ENCODE measurements at regions of chr3 and their contacts with region 1.

Region 1: DNA sequence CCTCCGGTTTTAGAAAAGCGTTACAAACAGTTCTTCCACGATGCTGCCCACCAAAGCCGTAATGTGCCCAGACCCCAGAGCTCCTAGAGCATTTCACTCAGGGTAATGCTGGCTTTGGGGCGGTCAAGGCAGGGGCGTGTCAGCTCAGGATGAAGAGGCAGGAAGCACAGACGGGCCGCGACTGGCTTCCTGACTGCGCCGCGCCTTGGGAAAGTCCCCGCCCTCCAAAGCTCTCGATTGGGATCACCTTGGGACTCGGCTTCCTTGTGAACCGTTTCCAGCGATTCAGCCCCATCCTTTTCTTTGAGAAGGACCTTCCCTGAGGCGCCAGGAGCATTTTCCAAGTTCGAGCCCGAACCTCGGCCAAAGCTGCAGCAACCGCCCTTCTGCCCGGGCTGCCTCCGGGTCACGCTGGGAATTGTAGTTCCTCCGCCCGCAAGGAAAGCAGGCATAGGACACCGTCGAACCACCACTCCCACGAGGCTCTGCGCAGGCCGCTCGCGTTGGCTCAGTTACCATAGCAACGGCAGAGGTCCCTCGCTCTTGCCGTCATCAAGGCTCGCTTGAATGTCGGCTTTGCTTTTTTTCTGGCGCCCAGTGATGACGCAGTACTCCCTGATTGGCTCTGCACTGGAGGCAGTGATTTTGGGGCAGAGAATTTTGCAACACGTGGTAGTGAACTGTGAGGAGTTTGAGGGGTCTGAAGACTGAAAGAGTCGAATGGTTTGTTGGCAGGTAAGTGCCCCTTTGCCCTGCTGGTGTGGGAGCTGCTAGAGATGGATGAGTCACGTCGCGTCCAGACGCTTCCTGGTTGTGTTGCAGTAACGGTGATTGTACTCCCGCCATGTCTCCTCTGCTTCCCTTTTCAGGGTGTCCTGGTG is at the starts of genes CCDC191 and QTRT2:
- DNase-seq: peak; percentile 97 to 100
- ATAC-seq: peak; percentile 94 to 98 (median 96)
- H3K4me3 ChIP-seq: peak within 1 kb of the TSS; percentile 82
- H3K4me3 Mint-ChIP-seq: peak within 1 kb of the TSS; percentile 98
- H3K27ac ChIP-seq: peak within 1 kb of the TSS; percentile 69
- H3K27ac Mint-ChIP-seq: peak within 1 kb of the TSS; percentile 95 to 96
- H3K4me1 ChIP-seq: peaks cover 6% of the 10 kb centered on the region
- H3K4me1 Mint-ChIP-seq: peaks cover 38 to 47% of the 10 kb centered on the region in 2 donors
- H3K27me3 ChIP-seq: no peaks in the 10 kb centered on the region
- H3K27me3 Mint-ChIP-seq: no peaks in the 10 kb centered on the region
- CTCF ChIP-seq: no peak
- total RNA-seq, gene CCDC191: 5.5 to 6.4 (median 5.7) TPM
- total RNA-seq, gene QTRT2: 30.1 to 33.4 (median 30.5) TPM

Region 2: DNA sequence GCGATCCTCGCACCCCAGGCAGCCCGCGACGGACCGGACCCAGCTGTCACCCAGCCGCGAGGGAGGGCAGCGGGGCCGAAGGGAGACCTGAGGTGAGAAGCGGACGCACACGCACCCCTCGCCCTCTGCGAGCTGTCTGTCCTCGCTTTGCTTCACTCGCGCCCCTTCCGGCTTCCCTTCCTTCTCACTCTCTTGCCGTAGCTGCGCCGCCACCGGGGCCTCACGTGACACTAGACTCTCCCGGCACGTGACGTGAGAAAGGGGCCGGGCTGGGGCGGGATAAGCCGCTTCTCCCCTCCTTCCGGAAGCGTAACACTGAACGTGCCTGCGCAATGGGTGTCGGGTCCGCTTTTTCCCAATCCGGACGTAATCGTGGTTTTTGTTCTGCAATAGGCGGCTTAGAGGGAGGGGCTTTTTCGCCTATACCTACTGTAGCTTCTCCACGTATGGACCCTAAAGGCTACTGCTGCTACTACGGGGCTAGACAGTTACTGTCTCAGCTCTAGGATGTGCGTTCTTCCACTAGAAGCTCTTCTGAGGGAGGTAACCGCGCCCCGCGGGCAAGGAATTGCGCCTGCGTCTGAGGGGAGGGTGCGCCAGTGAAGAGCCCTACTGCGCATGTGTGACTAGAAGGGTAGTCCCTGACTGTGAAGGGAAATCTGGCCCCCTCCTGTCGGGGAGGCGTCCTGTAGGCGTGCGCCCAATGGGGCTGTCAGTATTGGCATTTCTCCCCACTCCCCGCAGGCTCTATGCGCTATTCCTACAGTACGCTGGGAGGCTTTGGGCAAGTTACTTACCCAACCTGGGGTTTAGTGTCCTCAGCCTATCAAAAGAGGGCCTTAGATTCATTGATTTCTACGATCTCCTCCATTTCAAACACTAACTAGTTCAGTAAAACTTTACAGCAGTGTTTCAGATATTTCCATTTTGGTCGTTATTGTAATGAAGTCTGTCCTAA is 1494.4 kb before region 1 on chr3 and contains the starts of genes ATG3 and SLC35A5:
- intact Hi-C with region 1: loop called (anchors 5 kb)
- DNase-seq: peak; percentile 98 to 99
- ATAC-seq: peak; percentile 80 to 94 (median 86)
- H3K4me3 ChIP-seq: peak within 1 kb of the TSS; percentile 92
- H3K4me3 Mint-ChIP-seq: peak within 1 kb of the TSS; percentile 95
- H3K27ac ChIP-seq: peak within 1 kb of the TSS; percentile 96
- H3K27ac Mint-ChIP-seq: peak within 1 kb of the TSS; percentile 96 to 97
- H3K4me1 ChIP-seq: peaks cover 15% of the 10 kb centered on the region
- H3K4me1 Mint-ChIP-seq: peaks cover 46 to 47% of the 10 kb centered on the region in 2 donors
- H3K27me3 ChIP-seq: no peaks in the 10 kb centered on the region
- H3K27me3 Mint-ChIP-seq: no peaks in the 10 kb centered on the region
- CTCF ChIP-seq: no peak
- total RNA-seq, gene ATG3: 49.4 to 53.6 (median 52.0) TPM
- total RNA-seq, gene SLC35A5: 10.5 to 17.4 (median 11.2) TPM

Region 3: DNA sequence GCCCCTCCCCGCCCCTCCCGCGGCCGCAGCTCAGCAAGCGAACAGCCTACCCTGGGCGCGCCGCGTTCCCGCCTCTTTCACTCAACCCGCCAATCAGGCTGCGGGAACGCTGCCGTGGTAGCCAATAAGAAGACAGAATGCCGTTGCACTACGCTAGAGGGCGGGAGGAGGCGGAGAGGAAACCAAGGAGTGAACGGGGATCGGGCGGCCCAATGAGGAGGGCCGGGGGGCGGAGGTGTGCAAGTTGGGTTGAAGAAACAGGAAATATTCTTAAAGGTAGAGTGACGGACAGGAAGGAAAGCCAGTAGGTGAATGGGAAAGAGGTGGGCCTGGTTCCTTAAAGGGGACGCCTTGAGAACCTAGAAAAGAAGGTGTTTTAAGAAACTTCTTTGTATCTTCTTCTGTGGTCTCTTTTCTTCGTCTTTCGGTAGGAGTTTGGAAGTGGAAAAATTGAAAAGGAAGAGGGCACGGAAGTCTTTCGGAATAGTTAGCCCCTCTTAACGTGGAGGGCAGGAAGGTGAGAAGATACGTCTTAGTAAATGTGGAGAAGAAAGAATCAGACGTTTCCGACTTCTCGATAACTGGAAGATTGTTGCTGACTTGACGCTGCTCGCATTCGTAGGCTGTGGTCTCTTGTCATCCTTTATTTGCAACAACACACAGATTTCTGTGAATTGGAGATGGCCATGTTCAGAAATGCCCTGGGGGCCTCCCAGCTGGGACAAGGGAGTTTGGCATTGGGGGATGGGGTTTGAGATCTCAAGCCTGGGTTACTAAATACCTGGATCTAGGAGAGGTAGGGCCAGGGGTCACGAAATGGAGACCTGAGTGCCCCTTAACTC is 359.5 kb before region 1 on chr3:
- intact Hi-C with region 1: loop called (anchors 2 kb)
- DNase-seq: peak; percentile 99
- ATAC-seq: peak; percentile 86 to 95 (median 87)
- H3K4me3 ChIP-seq: peak overlapping the region; percentile 83
- H3K4me3 Mint-ChIP-seq: no peak overlapping the region
- H3K27ac ChIP-seq: peak overlapping the region; percentile 90
- H3K27ac Mint-ChIP-seq: no peak overlapping the region
- H3K4me1 ChIP-seq: peaks cover 9% of the 10 kb centered on the region
- H3K4me1 Mint-ChIP-seq: peaks cover 20 to 21% of the 10 kb centered on the region in 2 donors
- H3K27me3 ChIP-seq: no peaks in the 10 kb centered on the region
- H3K27me3 Mint-ChIP-seq: no peaks in the 10 kb centered on the region
- CTCF ChIP-seq: no peak

Region 4: DNA sequence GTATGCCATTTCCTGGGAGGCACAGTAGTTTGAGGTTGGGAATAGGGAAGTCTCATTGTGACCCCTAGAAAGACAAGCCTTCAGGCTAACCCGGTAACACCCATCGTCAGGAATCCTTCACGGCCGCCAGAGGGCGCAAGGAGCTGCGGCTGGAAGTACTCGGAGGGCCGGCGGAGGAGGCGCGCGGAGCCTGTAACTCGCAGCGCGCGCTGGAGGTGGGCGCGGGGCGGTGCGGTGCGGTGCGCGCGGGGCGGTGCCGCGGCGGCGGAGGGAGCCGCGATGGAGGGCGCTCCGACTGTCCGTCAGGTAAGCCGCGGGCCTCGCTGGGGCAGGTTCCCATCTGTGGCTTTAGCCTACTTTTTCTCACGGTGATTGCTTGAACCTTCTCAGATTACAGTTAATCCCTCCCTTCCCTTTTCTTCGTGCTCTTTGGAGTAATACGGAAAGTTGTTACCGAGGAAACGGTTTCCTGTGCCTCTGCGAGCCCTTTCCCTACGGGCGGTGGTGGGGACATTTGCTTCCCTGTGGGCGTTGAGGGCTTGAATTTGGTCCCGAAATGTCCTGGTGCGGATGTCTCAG is 217.7 kb before region 1 on chr3 and contains the start of gene GRAMD1C:
- intact Hi-C with region 1: loop called (anchors 1 kb)
- DNase-seq: peak; percentile 82 to 95
- ATAC-seq: peak; percentile 98 to 100 (median 99)
- H3K4me3 ChIP-seq: peak within 1 kb of the TSS; percentile 50
- H3K4me3 Mint-ChIP-seq: peak within 1 kb of the TSS; percentile 87
- H3K27ac ChIP-seq: peak within 1 kb of the TSS; percentile 15
- H3K27ac Mint-ChIP-seq: peak within 1 kb of the TSS in 1 of 2 donors; percentile 74
- H3K4me1 ChIP-seq: peaks cover 10% of the 10 kb centered on the region
- H3K4me1 Mint-ChIP-seq: peaks cover 7 to 8% of the 10 kb centered on the region in 2 donors
- H3K27me3 ChIP-seq: no peaks in the 10 kb centered on the region
- H3K27me3 Mint-ChIP-seq: peaks cover 0 to 2% of the 10 kb centered on the region in 2 donors
- CTCF ChIP-seq: peak; percentile 86
- total RNA-seq, gene GRAMD1C: 2.7 to 3.9 (median 3.6) TPM

Region 5: GRCh38 chr3:114213627-114214541 is 157.5 kb after region 1 on chr3:
- intact Hi-C with region 1: loop called (anchors 10 kb)
- DNase-seq: peak; percentile 73 to 88
- ATAC-seq: peak; percentile 61 to 77 (median 63)
- H3K4me3 ChIP-seq: peak overlapping the region; percentile 46
- H3K4me3 Mint-ChIP-seq: no peak overlapping the region
- H3K27ac ChIP-seq: peak overlapping the region; percentile 97
- H3K27ac Mint-ChIP-seq: no peak overlapping the region
- H3K4me1 ChIP-seq: peaks cover 63% of the 10 kb centered on the region
- H3K4me1 Mint-ChIP-seq: no peaks in the 10 kb centered on the region
- H3K27me3 ChIP-seq: no peaks in the 10 kb centered on the region
- H3K27me3 Mint-ChIP-seq: no peaks in the 10 kb centered on the region
- CTCF ChIP-seq: peak; percentile 12